ENCODE measurements at regions of chr13 and their contacts with region 1.

Region 1: GRCh38 chr13:25301347-25302047 is at the start of gene NUP58:
- DNase-seq: peak; percentile 99
- total RNA-seq, gene NUP58: 28.9 TPM

Region 2: DNA sequence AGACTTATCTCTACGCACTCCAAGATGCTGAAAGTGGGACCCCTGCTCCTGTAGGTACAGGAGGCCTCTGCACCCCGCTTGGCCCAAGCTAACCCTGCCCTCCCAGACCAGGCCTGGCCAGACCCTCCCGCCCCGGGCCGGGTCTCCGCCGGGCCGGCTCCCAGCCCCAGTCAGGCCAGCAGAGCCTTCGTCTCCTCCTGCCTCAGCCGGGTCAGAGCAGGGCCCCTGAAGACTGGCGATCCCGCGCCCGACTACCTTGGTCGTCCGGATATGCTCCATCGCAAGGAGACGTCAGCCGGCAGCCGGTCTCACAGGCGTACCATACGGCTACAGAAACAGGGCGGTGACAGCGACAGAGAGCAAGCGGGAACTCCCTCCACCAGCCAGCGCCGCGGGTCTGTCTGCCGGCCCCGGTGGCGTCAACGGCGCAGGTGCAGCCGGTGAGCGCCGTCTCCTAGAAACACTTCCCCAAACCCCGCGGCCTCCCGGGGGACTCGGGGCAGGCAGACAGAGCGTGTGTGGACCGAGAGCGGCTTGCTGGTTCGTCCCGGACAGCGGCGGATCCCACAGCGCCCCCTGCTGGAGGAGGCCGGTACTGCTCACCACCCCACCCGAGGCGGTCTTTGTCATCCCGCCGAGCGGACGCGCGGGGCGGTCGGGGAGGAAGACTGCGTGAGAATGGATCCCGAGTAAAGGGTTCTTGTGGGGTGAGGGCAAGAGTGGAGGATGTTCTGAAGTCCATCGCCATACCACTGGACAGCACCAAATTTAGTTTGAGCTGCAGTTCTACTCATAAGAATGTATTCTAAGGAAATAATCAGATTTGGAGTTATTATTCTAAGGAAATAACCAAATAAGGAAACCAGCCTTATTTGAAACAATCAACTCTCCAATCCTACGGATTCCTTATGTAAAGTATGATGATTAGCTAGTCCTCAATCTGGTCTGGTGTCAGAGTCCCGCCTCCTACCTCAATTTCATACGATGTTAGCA is 14.2 kb before region 1 on chr13 and contains the start of gene MTMR6:
- intact Hi-C with region 1: loop called (anchors 1 kb)
- DNase-seq: peak; percentile 99
- total RNA-seq, gene MTMR6: 16.1 TPM

Region 3: DNA sequence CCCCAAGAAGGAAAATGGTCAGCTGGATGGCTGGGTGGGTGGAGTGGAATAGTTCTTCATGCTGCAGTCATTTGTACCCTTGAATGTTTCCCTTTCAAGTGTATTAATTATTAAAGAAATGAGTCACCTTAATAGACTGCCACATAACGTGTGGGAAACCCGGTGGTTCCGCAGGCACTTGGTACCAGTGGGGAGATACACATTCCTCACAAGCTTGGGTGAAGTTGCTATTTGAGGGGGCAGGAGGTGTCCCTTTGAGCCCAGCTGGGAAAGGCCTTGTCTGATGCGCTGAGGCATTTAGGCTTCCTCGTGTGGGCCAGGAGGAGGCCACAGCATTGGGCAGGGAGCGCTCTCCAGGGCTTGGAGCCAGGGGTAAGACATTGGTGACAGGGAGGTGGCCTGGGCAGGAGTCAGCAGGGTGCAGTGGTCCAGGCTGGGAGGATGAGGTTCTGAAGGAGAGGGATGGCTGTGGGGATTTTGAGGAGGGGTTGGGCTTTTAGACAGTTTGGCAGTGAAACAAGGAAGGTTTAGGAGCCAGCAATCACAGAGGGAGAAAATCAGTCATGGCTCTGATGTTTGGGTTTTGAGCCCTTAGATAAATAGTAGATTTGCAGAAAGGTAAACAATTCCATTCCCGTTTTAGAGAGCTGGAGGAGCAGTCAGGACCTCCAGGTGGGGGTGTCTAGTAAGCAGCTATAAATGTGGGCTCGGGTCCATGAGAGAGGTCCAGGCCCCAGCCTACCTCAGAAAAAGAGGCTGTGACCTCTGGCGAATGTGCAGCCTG is 128.2 kb after region 1 on chr13:
- intact Hi-C with region 1: no loop called
- DNase-seq: no peak

Region 4: GRCh38 chr13:25489238-25489637 is 187.7 kb after region 1 on chr13:
- intact Hi-C with region 1: no loop called
- DNase-seq: no peak

Measured in cardiac septum (tissue), 1 donor.